HepG2 (cell line): ENCODE measurements at regions of chr3 and their contacts with region 1.

Region 1: GRCh38 chr3:194682694-194683310 is 2.9 kb upstream of the FAM43A start:
- DNase-seq: peak; percentile 83
- ATAC-seq: peak; percentile 84
- H3K4me3 ChIP-seq: peak overlapping the region in 1 of 3 experiments; percentile 59; a peak in 3 of 6 replicates
- H3K27ac ChIP-seq: no peak overlapping the region
- H3K4me1 ChIP-seq: peaks cover 50% of the 10 kb centered on the region
- H3K27me3 ChIP-seq: peaks cover 0 to 31% of the 10 kb centered on the region in 2 experiments; a peak in 1 of 5 replicates
- CTCF ChIP-seq: peak; percentile 96
- EP300 ChIP-seq: no peak
- POLR2A ChIP-seq: no peak
- RAD21 ChIP-seq: peak; percentile 93

Region 2: GRCh38 chr3:194671900-194672808 is 10.6 kb before region 1 on chr3 and contains the start of gene LSG1:
- CTCF ChIA-PET with region 1: interaction called, 5 read pairs
- POLR2A ChIA-PET with region 1: interaction called, 19 read pairs
- in situ Hi-C with region 1: no loop called
- intact Hi-C with region 1: no loop called
- DNase-seq: peak; percentile 90
- ATAC-seq: peak; percentile 93
- H3K4me3 ChIP-seq: peak within 1 kb of the TSS; percentile 79 to 85 (median 84)
- H3K27ac ChIP-seq: peak within 1 kb of the TSS; percentile 81
- H3K4me1 ChIP-seq: peaks cover 43% of the 10 kb centered on the region
- H3K27me3 ChIP-seq: peaks cover 0 to 3% of the 10 kb centered on the region in 2 experiments; a peak in 1 of 5 replicates
- CTCF ChIP-seq: peak; percentile 35; the same call in 1 of the 2 replicates
- EP300 ChIP-seq: no peak; a peak in 1 of 4 replicates
- POLR2A ChIP-seq: peak; percentile 68 to 72
- RAD21 ChIP-seq: no peak
- total RNA-seq, gene LSG1: 19.3 and 32.1 TPM in 2 replicates

Region 3: DNA sequence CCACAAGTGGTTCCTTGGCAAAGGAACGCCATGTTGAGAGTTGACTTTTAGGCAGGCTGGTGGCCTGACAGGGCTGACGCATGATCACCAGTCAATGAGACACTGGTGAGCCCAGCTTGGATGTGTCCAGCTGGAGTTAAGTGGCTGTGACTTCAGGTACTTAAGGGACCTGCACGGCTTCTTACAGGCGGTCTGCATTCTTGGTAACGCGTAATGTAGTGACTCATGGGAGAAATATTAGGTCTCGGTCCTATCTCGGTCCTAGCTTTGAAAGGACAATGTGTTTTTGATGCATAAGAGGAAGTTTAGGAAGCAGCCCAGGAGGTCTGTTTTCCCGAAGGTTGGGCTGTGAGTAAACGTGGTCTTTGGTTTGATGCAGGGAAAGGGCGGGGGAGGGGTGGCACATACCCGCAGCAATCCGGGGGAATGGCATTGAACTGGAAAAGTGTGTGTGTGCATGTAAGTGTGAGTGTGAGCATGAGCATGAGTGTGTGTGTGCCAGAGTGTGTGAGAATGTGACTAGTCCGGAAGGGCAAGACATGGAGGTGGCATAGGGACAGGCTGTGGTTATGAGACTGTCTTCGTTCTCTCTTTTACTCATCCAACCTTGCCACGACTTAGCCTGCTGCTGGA is 58.2 kb after region 1 on chr3:
- CTCF ChIA-PET with region 1: no interaction called
- POLR2A ChIA-PET with region 1: no interaction called
- in situ Hi-C with region 1: loop called (anchors 10 kb)
- intact Hi-C with region 1: loop called (anchors 10 kb)
- DNase-seq: peak; percentile 64
- ATAC-seq: peak; percentile 54
- H3K4me3 ChIP-seq: peak overlapping the region in 1 of 3 experiments; percentile 33; a peak in 1 of 6 replicates
- H3K27ac ChIP-seq: no peak overlapping the region
- H3K4me1 ChIP-seq: peaks cover 25% of the 10 kb centered on the region
- H3K27me3 ChIP-seq: peaks cover 0 to 49% of the 10 kb centered on the region in 2 experiments; a peak in 4 of 5 replicates
- CTCF ChIP-seq: no peak
- EP300 ChIP-seq: no peak
- POLR2A ChIP-seq: no peak
- RAD21 ChIP-seq: no peak

Region 4: DNA sequence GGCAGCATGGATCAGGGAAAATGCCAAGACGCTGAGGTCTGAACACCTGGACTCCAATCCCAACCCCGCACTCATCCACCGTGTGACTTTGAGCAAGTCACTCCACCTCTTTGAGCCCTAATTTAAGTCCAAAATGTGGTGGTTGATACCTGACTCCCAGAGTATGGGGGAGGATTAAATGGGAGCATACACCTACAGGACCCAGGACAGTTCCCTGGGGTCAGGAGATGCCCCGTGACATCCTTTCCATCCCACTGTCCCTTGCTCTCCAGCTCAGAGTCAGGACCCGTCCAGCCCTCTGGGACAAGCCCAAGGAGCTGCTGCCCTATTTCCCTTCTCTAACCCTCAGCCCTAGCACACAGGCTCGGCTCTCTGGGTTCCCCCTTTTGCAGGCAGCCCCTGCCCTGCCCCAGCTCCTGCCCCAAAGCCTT is 311.8 kb after region 1 on chr3:
- CTCF ChIA-PET with region 1: no interaction called
- POLR2A ChIA-PET with region 1: no interaction called
- in situ Hi-C with region 1: no loop called
- intact Hi-C with region 1: loop called (anchors 2 kb)
- DNase-seq: no peak
- ATAC-seq: peak; percentile 51
- H3K4me3 ChIP-seq: no peak overlapping the region; a peak in 1 of 6 replicates
- H3K27ac ChIP-seq: no peak overlapping the region
- H3K4me1 ChIP-seq: peaks cover 21% of the 10 kb centered on the region
- H3K27me3 ChIP-seq: 0 out of 5 replicates have a peak, but pooled peaks cover 1 to 4% of the 10 kb centered on the region in 2 experiments
- CTCF ChIP-seq: no peak
- EP300 ChIP-seq: no peak
- POLR2A ChIP-seq: no peak
- RAD21 ChIP-seq: no peak

Region 5: DNA sequence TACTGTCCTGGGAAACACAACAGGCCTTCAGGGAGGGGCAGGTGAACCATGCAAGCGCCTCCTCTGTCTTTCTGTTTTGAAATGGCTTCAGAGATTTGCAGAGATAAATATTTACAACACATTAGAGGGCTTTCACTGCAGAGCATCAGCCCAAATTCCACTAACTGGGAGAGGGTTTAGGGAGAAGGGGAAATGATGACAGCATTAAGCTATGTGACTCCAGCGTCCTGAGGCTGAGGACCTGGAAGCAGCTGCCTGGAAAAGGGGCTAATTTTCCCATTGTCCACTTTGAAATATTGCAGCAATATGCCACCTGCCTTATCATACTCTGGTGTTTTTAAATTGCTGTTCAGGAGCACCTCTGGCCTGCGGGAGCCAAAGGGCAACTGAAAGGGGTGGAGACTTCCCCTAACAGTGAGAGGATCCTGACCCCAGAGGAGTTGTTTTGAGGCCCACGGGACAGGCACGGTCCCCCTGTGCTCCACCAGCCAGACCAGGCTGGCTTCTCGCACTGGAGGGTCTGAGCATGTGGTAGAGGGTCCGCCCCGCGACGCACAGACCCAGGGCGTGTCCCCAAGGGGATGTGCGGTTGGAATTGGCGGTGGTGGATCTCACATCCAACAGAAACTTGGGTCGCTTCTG is 477.6 kb after region 1 on chr3:
- CTCF ChIA-PET with region 1: no interaction called
- POLR2A ChIA-PET with region 1: no interaction called
- in situ Hi-C with region 1: no loop called
- intact Hi-C with region 1: loop called (anchors 5 kb)
- DNase-seq: peak; percentile 95
- ATAC-seq: peak; percentile 65
- H3K4me3 ChIP-seq: peak overlapping the region in 1 of 3 experiments; percentile 3; a peak in 1 of 6 replicates
- H3K27ac ChIP-seq: peak overlapping the region; percentile 100
- H3K4me1 ChIP-seq: peaks cover 100% of the 10 kb centered on the region
- H3K27me3 ChIP-seq: no peaks in the 10 kb centered on the region
- CTCF ChIP-seq: no peak
- EP300 ChIP-seq: peak in 1 of 2 experiments; percentile 76; a peak in 2 of 4 replicates
- POLR2A ChIP-seq: peak in 1 of 2 experiments; percentile 18; a peak in 1 of 4 replicates
- RAD21 ChIP-seq: no peak

Region 6: DNA sequence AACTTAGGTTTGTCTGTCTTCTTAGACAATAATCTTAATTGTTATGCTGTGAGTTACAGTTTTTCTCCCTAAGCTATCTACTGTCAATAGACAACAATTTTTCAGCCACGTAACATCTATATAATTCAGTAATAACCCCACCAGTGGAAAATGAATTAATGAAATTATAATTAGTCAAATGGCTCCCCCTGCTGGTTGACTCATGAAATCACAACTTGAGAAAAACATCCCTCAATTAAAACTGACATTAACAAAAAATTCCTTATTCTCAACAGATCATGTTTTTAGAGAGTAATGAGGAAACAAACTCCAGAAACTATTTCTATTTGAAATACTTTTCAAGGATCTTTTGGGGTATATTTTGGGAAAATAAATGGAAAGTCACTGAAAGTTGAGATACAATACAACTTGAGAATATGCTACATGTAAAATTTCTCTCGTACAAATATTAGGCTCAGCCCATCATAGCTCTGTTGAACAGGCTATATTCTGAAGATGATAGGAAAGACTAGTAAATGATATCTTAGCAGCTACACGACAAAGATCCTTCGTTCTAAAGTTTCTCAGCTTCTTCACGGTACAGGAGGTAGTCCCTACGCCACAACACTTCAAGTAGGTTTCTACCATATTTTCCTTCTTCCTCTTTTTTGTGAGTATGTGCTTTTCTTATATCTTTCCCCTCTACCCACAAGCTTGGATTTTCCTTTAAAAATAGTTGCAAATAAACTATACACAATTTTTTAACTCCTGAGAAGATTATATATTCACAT is 839.6 kb after region 1 on chr3:
- CTCF ChIA-PET with region 1: no interaction called
- POLR2A ChIA-PET with region 1: no interaction called
- in situ Hi-C with region 1: no loop called
- intact Hi-C with region 1: loop called (anchors 10 kb)
- DNase-seq: no peak
- ATAC-seq: no peak
- H3K4me3 ChIP-seq: no peak overlapping the region
- H3K27ac ChIP-seq: no peak overlapping the region
- H3K4me1 ChIP-seq: no peaks in the 10 kb centered on the region
- H3K27me3 ChIP-seq: no peaks in the 10 kb centered on the region
- CTCF ChIP-seq: peak; percentile 60
- EP300 ChIP-seq: no peak
- POLR2A ChIP-seq: no peak
- RAD21 ChIP-seq: peak; percentile 33; the same call in 1 of the 2 replicates